ENCODE measurements at regions of chr1 and their contacts with region 1.

Region 1: GRCh38 chr1:229495782-229496181 is 12.4 kb downstream of the NUP133 start:
- DNase-seq: no peak
- H3K4me3 ChIP-seq: no peak overlapping the region
- H3K4me3 Mint-ChIP-seq: no peak overlapping the region
- H3K27ac ChIP-seq: no peak overlapping the region
- H3K27ac Mint-ChIP-seq: no peak overlapping the region
- H3K4me1 ChIP-seq: no peaks in the 10 kb centered on the region
- H3K4me1 Mint-ChIP-seq: peaks cover 0 to 4% (median 0%) of the 10 kb centered on the region in 4 donors
- H3K27me3 ChIP-seq: no peaks in the 10 kb centered on the region
- H3K27me3 Mint-ChIP-seq: no peaks in the 10 kb centered on the region

Region 2: GRCh38 chr1:229514578-229515275 is 18.9 kb after region 1 on chr1:
- CTCF ChIA-PET with region 1: interaction called, 10 read pairs
- POLR2A ChIA-PET with region 1: interaction called, 3 read pairs
- intact Hi-C with region 1: no loop called
- DNase-seq: peak; percentile 67 to 72 (median 69)
- H3K4me3 ChIP-seq: no peak overlapping the region
- H3K4me3 Mint-ChIP-seq: no peak overlapping the region
- H3K27ac ChIP-seq: no peak overlapping the region
- H3K27ac Mint-ChIP-seq: peak overlapping the region in 5 of 7 donors; percentile 18 to 62 (median 36)
- H3K4me1 ChIP-seq: no peaks in the 10 kb centered on the region
- H3K4me1 Mint-ChIP-seq: peaks cover 2 to 8% (median 6%) of the 10 kb centered on the region in 4 donors
- H3K27me3 ChIP-seq: no peaks in the 10 kb centered on the region
- H3K27me3 Mint-ChIP-seq: no peaks in the 10 kb centered on the region